CD8-positive, alpha-beta memory T cell (primary cell): ENCODE measurements at regions of chr19 and their contacts with region 1.

Region 1: GRCh38 chr19:1942078-1942933 is 1.3 kb downstream of the CSNK1G2 start:
- DNase-seq: peak; percentile 77 to 89 (median 84)
- H3K4me3 ChIP-seq: peak overlapping the region; percentile 75
- H3K4me3 Mint-ChIP-seq: peak overlapping the region; percentile 89 to 100 (median 93)
- H3K27ac ChIP-seq: peak overlapping the region; percentile 89
- H3K27ac Mint-ChIP-seq: peak overlapping the region; percentile 98 to 100 (median 98)
- H3K4me1 ChIP-seq: peaks cover 34% of the 10 kb centered on the region
- H3K4me1 Mint-ChIP-seq: peaks cover 27 to 62% (median 29%) of the 10 kb centered on the region in 3 donors
- H3K27me3 ChIP-seq: no peaks in the 10 kb centered on the region
- H3K27me3 Mint-ChIP-seq: peaks cover 0 to 12% of the 10 kb centered on the region in 2 donors

Region 2: GRCh38 chr19:1918975-1919374 is 23.3 kb before region 1 on chr19:
- CTCF ChIA-PET with region 1: no interaction called
- POLR2A ChIA-PET with region 1: no interaction called
- DNase-seq: no peak
- H3K4me3 ChIP-seq: no peak overlapping the region
- H3K4me3 Mint-ChIP-seq: no peak overlapping the region
- H3K27ac ChIP-seq: no peak overlapping the region
- H3K27ac Mint-ChIP-seq: no peak overlapping the region
- H3K4me1 ChIP-seq: no peaks in the 10 kb centered on the region
- H3K4me1 Mint-ChIP-seq: peaks cover 0 to 1% (median 0%) of the 10 kb centered on the region in 3 donors
- H3K27me3 ChIP-seq: no peaks in the 10 kb centered on the region
- H3K27me3 Mint-ChIP-seq: no peaks in the 10 kb centered on the region

Region 3: DNA sequence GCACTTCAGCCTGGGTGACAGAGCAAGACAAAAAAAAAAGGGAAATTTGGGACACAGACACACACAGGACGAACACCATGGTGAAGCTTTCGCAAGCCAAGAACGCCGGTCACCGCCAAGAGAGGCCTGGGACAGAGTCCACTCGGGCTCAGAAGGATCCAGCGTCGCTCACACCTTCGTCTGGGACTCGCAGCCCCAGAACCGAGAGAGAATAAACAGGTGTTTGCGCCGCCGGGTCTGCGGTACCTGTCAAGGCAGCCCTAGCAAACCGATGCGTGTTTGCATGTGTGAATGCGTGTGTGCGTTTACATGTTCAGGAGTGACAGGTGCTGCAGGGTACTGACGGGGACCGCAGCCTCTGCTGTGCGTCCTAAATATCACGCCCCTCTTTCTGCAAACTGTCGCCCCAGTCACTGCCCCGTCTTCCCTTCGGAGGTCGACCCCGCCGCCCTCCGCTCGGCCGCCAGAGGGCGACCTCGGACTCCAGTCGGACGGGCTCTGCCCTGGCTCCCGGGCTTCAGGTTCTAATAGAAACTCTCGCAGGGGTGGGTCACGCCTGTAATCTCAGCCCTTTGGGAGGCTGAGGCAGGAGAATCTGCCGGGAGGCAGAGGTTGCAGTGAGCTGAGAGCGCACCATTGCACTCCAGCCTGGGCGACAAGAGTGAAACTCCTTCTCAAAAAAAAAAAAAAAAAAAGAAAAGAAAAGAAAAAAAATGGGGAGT is 13.1 kb before region 1 on chr19:
- CTCF ChIA-PET with region 1: interaction called, 11 read pairs
- POLR2A ChIA-PET with region 1: no interaction called
- DNase-seq: peak; percentile 74 to 85 (median 75)
- H3K4me3 ChIP-seq: peak overlapping the region; percentile 45
- H3K4me3 Mint-ChIP-seq: peak overlapping the region; percentile 66 to 93 (median 74)
- H3K27ac ChIP-seq: no peak overlapping the region
- H3K27ac Mint-ChIP-seq: peak overlapping the region in 4 of 8 donors; percentile 52 to 98 (median 87)
- H3K4me1 ChIP-seq: peaks cover 20% of the 10 kb centered on the region
- H3K4me1 Mint-ChIP-seq: peaks cover 15 to 28% (median 18%) of the 10 kb centered on the region in 3 donors
- H3K27me3 ChIP-seq: no peaks in the 10 kb centered on the region
- H3K27me3 Mint-ChIP-seq: peaks cover 0 to 4% of the 10 kb centered on the region in 2 donors